CD4-positive, alpha-beta T cell (primary cell): ENCODE measurements at regions of chr15 and their contacts with region 1.

Region 1: DNA sequence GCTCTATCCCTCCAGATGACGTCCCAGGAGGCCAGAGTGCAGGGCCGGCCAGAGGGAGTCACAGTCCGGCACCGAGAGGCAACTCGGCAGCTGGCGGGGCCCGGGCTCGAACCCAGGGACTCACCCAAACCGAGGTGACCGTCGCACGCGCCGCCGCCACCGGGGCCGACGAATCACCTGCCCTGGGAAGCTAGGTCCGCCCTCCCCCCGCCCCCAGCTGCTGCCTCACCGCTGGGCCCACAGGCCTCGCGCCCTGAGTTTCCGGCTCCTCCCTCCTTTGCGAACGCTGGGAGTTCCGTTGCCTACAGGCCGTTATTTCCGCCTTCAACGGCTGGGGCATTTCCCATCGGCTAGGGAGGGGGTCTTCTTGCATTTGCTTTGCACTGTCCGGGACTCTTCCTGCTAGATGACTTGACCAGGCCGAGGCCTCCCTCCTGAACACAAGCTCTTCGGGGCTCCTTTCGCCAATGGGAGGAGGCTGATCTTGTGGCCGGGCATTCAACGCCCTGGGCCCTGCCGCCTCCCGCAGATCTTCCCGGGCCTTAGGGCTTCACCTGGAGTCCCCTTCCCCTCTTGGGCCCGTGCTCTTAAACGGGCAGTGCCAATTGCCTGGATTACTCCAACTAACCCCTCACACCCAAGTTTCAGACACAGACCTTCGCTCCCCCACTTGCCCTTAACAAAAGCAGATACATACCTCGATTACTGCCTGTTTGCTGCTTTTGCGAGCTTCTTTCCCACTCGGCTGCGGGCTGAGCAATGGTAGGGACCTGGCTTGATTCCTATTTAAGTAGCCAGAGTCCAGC is at the start of gene SNUPN:
- DNase-seq: peak; percentile 86 to 97 (median 92)
- ATAC-seq: peak; percentile 92
- H3K4me3 ChIP-seq: peak within 1 kb of the TSS; percentile 100
- H3K4me3 Mint-ChIP-seq: peak within 1 kb of the TSS; percentile 92
- H3K27ac ChIP-seq: peak within 1 kb of the TSS; percentile 95
- H3K27ac Mint-ChIP-seq: peak within 1 kb of the TSS; percentile 90
- H3K4me1 ChIP-seq: peaks cover 31% of the 10 kb centered on the region
- H3K4me1 Mint-ChIP-seq: peaks cover 29% of the 10 kb centered on the region
- H3K27me3 ChIP-seq: no peaks in the 10 kb centered on the region
- H3K27me3 Mint-ChIP-seq: no peaks in the 10 kb centered on the region
- CTCF ChIP-seq: no peak
- total RNA-seq, gene SNUPN: 10.0 to 11.6 TPM

Region 2: GRCh38 chr15:73991726-73992593 is 1633.8 kb before region 1 on chr15 and contains the start of gene STOML1:
- CTCF ChIA-PET with region 1: no interaction called
- POLR2A ChIA-PET with region 1: no interaction called
- intact Hi-C with region 1: loop called in 1 of 2 experiments (anchors 10 kb)
- DNase-seq: peak; percentile 85 to 98 (median 94)
- ATAC-seq: peak; percentile 74
- H3K4me3 ChIP-seq: peak within 1 kb of the TSS; percentile 71
- H3K4me3 Mint-ChIP-seq: peak within 1 kb of the TSS; percentile 82
- H3K27ac ChIP-seq: peak within 1 kb of the TSS in 1 of 2 donors; percentile 47
- H3K27ac Mint-ChIP-seq: peak within 1 kb of the TSS; percentile 85
- H3K4me1 ChIP-seq: peaks cover 48% of the 10 kb centered on the region
- H3K4me1 Mint-ChIP-seq: peaks cover 51% of the 10 kb centered on the region
- H3K27me3 ChIP-seq: no peaks in the 10 kb centered on the region
- H3K27me3 Mint-ChIP-seq: no peaks in the 10 kb centered on the region
- CTCF ChIP-seq: peak; percentile 83
- total RNA-seq, gene STOML1: 4.6 to 5.3 TPM

Region 3: DNA sequence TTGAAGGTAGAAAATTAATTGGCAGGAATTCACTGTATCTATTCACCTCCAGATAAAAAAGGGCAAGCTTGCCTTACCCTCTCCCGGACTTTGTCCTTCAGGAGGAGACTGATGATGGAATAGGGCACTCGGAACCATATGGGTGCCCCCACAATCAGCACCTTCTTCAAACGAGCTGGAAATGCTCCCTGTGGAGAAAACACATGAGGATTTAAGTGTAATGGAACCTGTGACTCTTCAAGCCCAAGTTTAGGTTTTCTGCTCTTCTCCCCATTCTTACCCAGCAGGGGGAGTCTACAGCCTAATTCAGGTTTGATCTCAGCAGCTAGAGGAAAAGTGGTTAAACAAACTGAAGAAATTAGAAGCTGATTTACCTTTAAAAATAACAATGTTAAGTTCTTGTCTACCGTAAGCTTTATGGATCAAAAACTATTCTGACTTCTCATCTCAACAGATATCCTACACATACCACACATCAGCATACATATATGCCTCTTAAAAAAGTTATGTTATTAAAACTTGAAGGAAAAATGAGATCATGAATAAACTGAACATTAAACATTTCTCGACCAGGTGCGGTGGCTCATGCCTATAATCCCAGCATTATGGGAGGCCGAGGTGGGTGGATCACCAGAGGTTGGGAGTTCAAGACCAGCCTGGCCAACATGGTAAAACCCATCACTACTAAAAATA is 116.8 kb before region 1 on chr15:
- CTCF ChIA-PET with region 1: interaction called, 3 read pairs
- POLR2A ChIA-PET with region 1: interaction called, 8 read pairs
- intact Hi-C with region 1: loop called in 1 of 2 experiments (anchors 5 kb)
- DNase-seq: peak in 6 of 14 experiments; percentile 15 to 64 (median 48)
- ATAC-seq: peak; percentile 34
- H3K4me3 ChIP-seq: no peak overlapping the region
- H3K4me3 Mint-ChIP-seq: no peak overlapping the region
- H3K27ac ChIP-seq: no peak overlapping the region
- H3K27ac Mint-ChIP-seq: peak overlapping the region; percentile 13
- H3K4me1 ChIP-seq: no peaks in the 10 kb centered on the region
- H3K4me1 Mint-ChIP-seq: no peaks in the 10 kb centered on the region
- H3K27me3 ChIP-seq: no peaks in the 10 kb centered on the region
- H3K27me3 Mint-ChIP-seq: no peaks in the 10 kb centered on the region
- CTCF ChIP-seq: peak; percentile 60

Region 4: DNA sequence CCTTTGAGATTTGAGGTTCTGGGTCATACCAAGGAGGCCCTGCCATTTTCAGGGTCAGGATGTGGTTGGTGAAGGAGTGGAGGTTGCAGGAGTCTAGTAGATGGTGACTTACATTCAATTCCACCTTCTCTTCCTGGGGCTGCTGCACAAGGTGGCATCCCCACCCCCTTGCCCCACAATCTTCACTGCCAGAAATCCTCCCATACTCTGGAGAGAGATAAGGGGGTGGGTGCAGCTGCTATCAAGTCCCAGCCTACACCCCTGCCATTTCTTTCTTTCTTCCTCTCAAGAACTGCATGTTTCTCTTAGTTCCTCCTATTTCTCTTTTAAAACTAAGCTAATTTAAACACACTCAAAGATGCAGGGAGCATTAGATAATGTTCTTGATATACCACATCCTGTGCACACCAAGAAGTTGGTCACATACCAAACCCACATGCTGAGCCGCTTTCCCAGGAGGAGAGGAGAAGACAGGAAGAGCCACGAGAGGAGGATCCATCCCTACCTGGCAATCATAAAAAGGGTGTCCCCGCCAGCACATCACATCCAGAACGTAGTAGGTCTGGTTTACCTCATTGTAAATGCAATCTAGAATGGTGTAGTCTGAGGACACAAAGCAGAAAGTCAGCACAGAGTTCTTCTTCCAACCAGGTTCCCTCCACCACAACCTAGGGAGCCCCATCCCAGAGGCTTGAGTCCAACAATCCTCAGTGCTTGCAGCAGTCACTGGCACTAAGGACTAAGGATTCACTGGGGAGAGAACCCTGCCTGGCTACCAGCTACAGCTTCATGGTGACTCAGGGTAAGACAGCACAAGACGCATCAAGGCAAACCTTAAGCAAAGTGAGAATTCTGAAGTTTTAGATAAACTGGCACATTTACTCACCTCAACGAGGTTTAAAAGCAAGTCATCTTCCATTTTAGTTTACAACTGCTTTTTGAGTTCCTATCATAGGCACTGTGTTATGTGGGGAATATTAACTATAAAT is 18.7 kb before region 1 on chr15:
- CTCF ChIA-PET with region 1: no interaction called
- POLR2A ChIA-PET with region 1: interaction called, 30 read pairs
- intact Hi-C with region 1: loop called in 1 of 2 experiments (anchors 2 kb)
- DNase-seq: peak in 8 of 14 experiments; percentile 6 to 77 (median 24)
- ATAC-seq: peak; percentile 75
- H3K4me3 ChIP-seq: peak overlapping the region; percentile 34
- H3K4me3 Mint-ChIP-seq: peak overlapping the region; percentile 68
- H3K27ac ChIP-seq: peak overlapping the region; percentile 44 to 63
- H3K27ac Mint-ChIP-seq: peak overlapping the region; percentile 76
- H3K4me1 ChIP-seq: peaks cover 48% of the 10 kb centered on the region
- H3K4me1 Mint-ChIP-seq: peaks cover 45% of the 10 kb centered on the region
- H3K27me3 ChIP-seq: no peaks in the 10 kb centered on the region
- H3K27me3 Mint-ChIP-seq: no peaks in the 10 kb centered on the region
- CTCF ChIP-seq: no peak

Region 5: DNA sequence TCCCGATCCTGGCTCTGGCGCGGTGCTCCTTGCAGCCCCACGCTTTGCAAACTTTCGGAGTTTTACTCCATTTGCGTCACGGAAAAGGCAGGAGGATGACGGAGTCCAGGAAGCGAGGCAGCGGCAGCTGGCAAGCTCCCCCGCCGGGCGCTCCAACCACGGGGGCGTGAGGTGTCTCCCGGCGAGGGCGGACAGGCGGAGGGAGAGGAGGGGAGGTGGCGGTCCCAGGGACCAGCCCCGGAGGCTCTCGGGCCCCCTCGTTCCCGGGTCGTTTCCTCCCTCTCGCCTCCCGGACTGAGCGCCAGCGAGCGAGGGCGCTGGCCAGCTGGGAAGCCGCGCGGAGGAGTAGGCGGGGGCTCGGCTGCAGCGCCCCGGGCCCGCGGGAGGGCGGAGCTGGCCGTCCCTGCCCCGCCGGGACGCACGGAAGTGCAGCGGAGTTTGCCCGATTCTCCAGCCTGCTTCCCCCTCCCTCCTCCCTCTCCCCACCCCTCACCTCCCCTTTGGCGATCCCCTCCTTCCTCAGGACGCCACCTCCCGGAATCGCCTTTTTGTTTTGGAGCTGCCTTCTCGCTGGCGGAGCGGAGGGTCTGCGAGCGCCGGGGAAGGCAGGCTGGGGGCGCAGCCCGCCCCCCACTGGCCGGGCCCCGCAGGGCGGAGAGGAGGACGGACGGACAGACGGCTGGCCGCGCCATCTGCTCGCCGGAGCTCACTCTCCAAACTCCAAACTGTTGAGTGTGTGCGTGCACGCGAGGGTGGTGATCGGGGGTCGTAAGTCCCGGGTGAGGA is 21.8 kb after region 1 on chr15 and contains the start of gene SNX33:
- CTCF ChIA-PET with region 1: no interaction called
- POLR2A ChIA-PET with region 1: interaction called, 28 read pairs
- intact Hi-C with region 1: no loop called
- DNase-seq: peak; percentile 10 to 75 (median 38)
- ATAC-seq: peak; percentile 68
- H3K4me3 ChIP-seq: peak within 1 kb of the TSS; percentile 84
- H3K4me3 Mint-ChIP-seq: peak within 1 kb of the TSS; percentile 86
- H3K27ac ChIP-seq: peak within 1 kb of the TSS in 1 of 2 donors; percentile 1
- H3K27ac Mint-ChIP-seq: peak within 1 kb of the TSS; percentile 42
- H3K4me1 ChIP-seq: peaks cover 41% of the 10 kb centered on the region
- H3K4me1 Mint-ChIP-seq: peaks cover 31% of the 10 kb centered on the region
- H3K27me3 ChIP-seq: no peaks in the 10 kb centered on the region
- H3K27me3 Mint-ChIP-seq: no peaks in the 10 kb centered on the region
- CTCF ChIP-seq: no peak
- total RNA-seq, gene SNX33: 0.59 to 0.82 TPM

Region 6: DNA sequence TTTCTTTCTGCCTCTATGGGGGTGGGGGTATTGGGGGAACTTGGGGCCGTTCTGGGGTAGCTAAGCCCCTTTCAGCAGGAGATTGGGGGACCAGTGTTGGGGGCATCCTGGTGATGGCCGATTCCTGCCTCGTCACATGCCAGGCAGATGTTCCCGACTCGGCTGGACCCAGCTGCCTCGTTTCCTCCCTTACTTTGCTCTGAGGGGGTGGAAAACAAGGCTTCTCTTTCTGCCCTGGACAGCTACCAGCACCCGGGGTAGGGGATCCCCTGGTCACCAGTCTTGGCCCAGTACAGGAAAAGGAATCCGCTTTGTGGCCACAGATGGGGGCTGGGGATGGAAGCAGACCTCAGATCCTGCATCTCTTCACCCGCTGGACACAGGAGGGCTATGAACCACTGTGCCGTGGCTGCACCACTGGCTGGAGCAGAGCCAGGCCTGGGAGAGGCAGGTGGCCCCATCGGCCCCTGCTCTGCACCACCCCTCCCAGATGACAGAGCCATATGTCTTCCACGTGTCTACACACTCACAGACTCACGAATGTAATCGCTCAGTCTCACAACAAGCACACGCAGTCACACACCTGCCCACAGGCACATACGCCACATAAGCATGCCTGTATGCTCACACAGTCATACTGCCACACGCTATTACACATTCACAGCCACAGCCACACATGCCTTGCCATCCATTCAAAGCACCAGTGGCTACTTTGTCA is 34.3 kb after region 1 on chr15:
- CTCF ChIA-PET with region 1: no interaction called
- POLR2A ChIA-PET with region 1: no interaction called
- intact Hi-C with region 1: no loop called
- DNase-seq: no peak
- ATAC-seq: no peak
- H3K4me3 ChIP-seq: no peak overlapping the region
- H3K4me3 Mint-ChIP-seq: no peak overlapping the region
- H3K27ac ChIP-seq: no peak overlapping the region
- H3K27ac Mint-ChIP-seq: no peak overlapping the region
- H3K4me1 ChIP-seq: no peaks in the 10 kb centered on the region
- H3K4me1 Mint-ChIP-seq: no peaks in the 10 kb centered on the region
- H3K27me3 ChIP-seq: no peaks in the 10 kb centered on the region
- H3K27me3 Mint-ChIP-seq: no peaks in the 10 kb centered on the region
- CTCF ChIP-seq: no peak